ENCODE measurements at regions of chr14 and their contacts with region 1.

Region 1: GRCh38 chr14:100383727-100384158 is 60.6 kb downstream of the SLC25A47 start:
- DNase-seq: peak; percentile 77
- ATAC-seq: peak; percentile 94
- H3K4me3 Mint-ChIP-seq: no peak overlapping the region
- H3K27ac Mint-ChIP-seq: no peak overlapping the region
- H3K4me1 Mint-ChIP-seq: peaks cover 35% of the 10 kb centered on the region
- H3K27me3 Mint-ChIP-seq: no peaks in the 10 kb centered on the region
- CTCF ChIP-seq: peak; percentile 84

Region 2: DNA sequence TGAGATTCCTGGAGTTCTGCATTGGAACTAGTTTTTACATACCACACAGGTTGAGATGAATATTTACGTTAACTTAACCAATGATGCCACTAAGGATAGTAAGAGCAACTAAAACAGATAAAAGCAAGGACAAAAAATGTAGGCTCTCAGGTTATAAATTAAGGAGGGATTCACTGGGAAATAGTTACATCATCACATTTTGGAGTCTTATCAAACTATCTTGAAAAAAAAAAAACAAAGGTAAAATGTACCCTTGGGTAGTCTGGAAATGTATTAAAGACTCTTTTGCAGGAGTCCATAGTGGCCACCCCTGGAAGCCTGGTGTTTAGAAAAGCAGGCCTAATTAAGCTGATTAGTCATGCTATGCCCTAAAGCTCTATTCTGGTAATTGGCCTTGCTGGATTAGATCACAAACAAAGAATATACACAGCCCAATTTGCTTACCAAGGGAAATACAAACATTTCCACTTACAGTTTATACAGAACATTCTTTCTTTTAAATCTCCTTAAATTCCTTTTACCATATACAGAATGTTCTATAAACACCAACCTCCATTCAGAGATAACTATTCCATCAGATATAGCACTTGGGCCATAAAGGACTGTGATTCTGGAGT is 21.3 kb before region 1 on chr14:
- CTCF ChIA-PET with region 1: no interaction called
- POLR2A ChIA-PET with region 1: no interaction called
- DNase-seq: no peak
- ATAC-seq: no peak
- H3K4me3 Mint-ChIP-seq: no peak overlapping the region
- H3K27ac Mint-ChIP-seq: no peak overlapping the region
- H3K4me1 Mint-ChIP-seq: no peaks in the 10 kb centered on the region
- H3K27me3 Mint-ChIP-seq: no peaks in the 10 kb centered on the region
- CTCF ChIP-seq: no peak

Region 3: GRCh38 chr14:100372357-100373048 is 11.2 kb before region 1 on chr14:
- CTCF ChIA-PET with region 1: interaction called, 25 read pairs
- POLR2A ChIA-PET with region 1: no interaction called
- DNase-seq: no peak
- ATAC-seq: no peak
- H3K4me3 Mint-ChIP-seq: no peak overlapping the region
- H3K27ac Mint-ChIP-seq: peak overlapping the region; percentile 73
- H3K4me1 Mint-ChIP-seq: peaks cover 45% of the 10 kb centered on the region
- H3K27me3 Mint-ChIP-seq: no peaks in the 10 kb centered on the region
- CTCF ChIP-seq: no peak

Region 4: DNA sequence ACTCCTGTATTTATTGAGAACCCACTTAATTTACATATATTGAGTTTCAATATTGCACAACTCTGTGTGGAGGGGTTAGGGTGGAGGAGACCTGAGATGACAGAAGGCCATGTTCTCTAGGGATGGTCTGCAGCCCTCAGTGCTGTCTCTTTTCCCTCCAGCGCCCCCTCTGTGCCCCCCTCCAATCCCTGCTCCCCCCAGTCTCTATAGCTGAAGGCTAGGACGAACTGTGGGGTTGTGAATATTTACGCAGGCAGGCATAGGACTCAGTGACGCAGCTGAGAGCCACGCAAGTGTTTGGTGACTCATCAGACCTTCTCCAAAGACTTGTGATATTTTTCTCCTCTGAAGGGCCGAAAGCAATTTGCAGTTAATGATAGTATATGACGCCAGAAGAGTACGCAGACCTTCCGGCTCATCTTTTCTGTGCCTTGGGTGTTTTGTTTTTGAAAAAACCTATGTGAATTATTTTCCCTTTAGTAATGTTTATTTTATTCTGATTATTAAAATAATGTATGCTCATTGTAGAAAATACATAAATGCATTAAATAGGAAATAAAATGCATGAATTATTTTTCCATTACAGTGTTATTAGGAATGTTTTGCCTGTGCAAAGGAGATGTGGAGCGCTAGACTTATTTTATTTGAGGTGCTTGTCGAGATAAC is 24.7 kb after region 1 on chr14:
- CTCF ChIA-PET with region 1: interaction called, 42 read pairs
- POLR2A ChIA-PET with region 1: no interaction called
- DNase-seq: no peak
- ATAC-seq: no peak
- H3K4me3 Mint-ChIP-seq: no peak overlapping the region
- H3K27ac Mint-ChIP-seq: no peak overlapping the region
- H3K4me1 Mint-ChIP-seq: peaks cover 41% of the 10 kb centered on the region
- H3K27me3 Mint-ChIP-seq: no peaks in the 10 kb centered on the region
- CTCF ChIP-seq: no peak

Region 5: DNA sequence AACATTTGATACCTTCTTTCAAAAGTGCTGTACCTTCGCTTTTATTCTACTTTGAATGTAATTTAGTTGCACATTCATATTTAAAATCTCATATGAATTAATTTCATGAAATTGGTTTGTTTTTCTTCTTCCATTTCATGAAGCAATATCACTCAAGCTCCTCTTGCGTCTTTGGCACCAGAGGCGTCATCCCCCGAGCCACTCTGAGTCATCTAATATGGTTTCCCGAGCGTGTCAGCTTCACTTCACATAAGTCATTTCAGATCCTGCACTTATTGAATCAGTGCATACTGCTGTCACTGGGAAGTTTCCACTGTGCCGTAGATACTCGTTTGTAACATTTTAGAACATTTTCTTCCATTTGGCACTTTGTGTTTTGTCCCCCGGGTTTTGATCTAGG is 45.0 kb after region 1 on chr14:
- CTCF ChIA-PET with region 1: interaction called, 23 read pairs
- POLR2A ChIA-PET with region 1: no interaction called
- DNase-seq: no peak
- ATAC-seq: no peak
- H3K4me3 Mint-ChIP-seq: no peak overlapping the region
- H3K27ac Mint-ChIP-seq: no peak overlapping the region
- H3K4me1 Mint-ChIP-seq: peaks cover 17% of the 10 kb centered on the region
- H3K27me3 Mint-ChIP-seq: no peaks in the 10 kb centered on the region
- CTCF ChIP-seq: no peak

Region 6: GRCh38 chr14:100440187-100440631 is 56.5 kb after region 1 on chr14:
- CTCF ChIA-PET with region 1: interaction called, 16 read pairs
- POLR2A ChIA-PET with region 1: no interaction called
- DNase-seq: peak; percentile 72
- ATAC-seq: peak; percentile 83
- H3K4me3 Mint-ChIP-seq: no peak overlapping the region
- H3K27ac Mint-ChIP-seq: 0 out of 2 replicates have a peak overlapping the region, but pooled peaks have one; percentile 43
- H3K4me1 Mint-ChIP-seq: peaks cover 33% of the 10 kb centered on the region
- H3K27me3 Mint-ChIP-seq: no peaks in the 10 kb centered on the region
- CTCF ChIP-seq: no peak

Region 7: DNA sequence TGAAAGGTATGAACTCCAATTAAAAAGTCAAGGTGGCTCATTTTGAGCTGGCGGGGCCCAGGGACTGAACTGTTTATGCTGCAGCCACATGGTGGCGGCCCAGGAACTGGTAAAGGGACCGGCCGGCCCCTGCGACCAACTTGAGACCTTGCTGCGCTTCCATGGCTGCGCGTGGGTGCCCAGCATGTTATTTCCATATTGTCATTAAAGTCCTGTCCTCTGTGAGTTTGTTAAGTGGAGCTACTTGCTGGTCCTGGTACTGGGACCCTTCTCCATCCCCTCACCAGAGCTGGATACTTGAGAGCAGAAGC is 141.1 kb after region 1 on chr14:
- CTCF ChIA-PET with region 1: interaction called, 16 read pairs
- POLR2A ChIA-PET with region 1: no interaction called
- DNase-seq: peak; percentile 76
- ATAC-seq: peak; percentile 82
- H3K4me3 Mint-ChIP-seq: no peak overlapping the region
- H3K27ac Mint-ChIP-seq: no peak overlapping the region
- H3K4me1 Mint-ChIP-seq: peaks cover 2% of the 10 kb centered on the region; the same call in 1 of the 2 replicates
- H3K27me3 Mint-ChIP-seq: no peaks in the 10 kb centered on the region
- CTCF ChIP-seq: peak; percentile 60; the same call in 1 of the 2 replicates

Measured in WTC11 (cell line).